PC-3 (cell line): ENCODE measurements at regions of chr21 and their contacts with region 1.

Region 1: GRCh38 chr21:31781737-31782136 is 49.8 kb upstream of the SCAF4 start:
- DNase-seq: peak; percentile 20
- ATAC-seq: no peak
- H3K4me3 ChIP-seq: no peak overlapping the region
- H3K27ac ChIP-seq: no peak overlapping the region
- H3K4me1 ChIP-seq: no peaks in the 10 kb centered on the region
- H3K27me3 ChIP-seq: no peaks in the 10 kb centered on the region
- CTCF ChIP-seq: no peak

Region 2: GRCh38 chr21:31846690-31847089 is 65.0 kb after region 1 on chr21:
- CTCF ChIA-PET with region 1: no interaction called
- POLR2A ChIA-PET with region 1: no interaction called
- intact Hi-C with region 1: no loop called
- DNase-seq: no peak
- ATAC-seq: no peak
- H3K4me3 ChIP-seq: no peak overlapping the region
- H3K27ac ChIP-seq: no peak overlapping the region
- H3K4me1 ChIP-seq: no peaks in the 10 kb centered on the region
- H3K27me3 ChIP-seq: peaks cover 66% of the 10 kb centered on the region
- CTCF ChIP-seq: no peak

Region 3: GRCh38 chr21:32604464-32604863 is 822.7 kb after region 1 on chr21:
- CTCF ChIA-PET with region 1: interaction called, 3 read pairs
- POLR2A ChIA-PET with region 1: no interaction called
- intact Hi-C with region 1: loop called (anchors 10 kb)
- DNase-seq: no peak
- ATAC-seq: no peak
- H3K4me3 ChIP-seq: no peak overlapping the region
- H3K27ac ChIP-seq: no peak overlapping the region
- H3K4me1 ChIP-seq: no peaks in the 10 kb centered on the region; the same call in 1 of the 2 replicates
- H3K27me3 ChIP-seq: no peaks in the 10 kb centered on the region
- CTCF ChIP-seq: no peak